Natural killer cell (primary cell): ENCODE measurements at regions of chr7 and their contacts with region 1.

Region 1: DNA sequence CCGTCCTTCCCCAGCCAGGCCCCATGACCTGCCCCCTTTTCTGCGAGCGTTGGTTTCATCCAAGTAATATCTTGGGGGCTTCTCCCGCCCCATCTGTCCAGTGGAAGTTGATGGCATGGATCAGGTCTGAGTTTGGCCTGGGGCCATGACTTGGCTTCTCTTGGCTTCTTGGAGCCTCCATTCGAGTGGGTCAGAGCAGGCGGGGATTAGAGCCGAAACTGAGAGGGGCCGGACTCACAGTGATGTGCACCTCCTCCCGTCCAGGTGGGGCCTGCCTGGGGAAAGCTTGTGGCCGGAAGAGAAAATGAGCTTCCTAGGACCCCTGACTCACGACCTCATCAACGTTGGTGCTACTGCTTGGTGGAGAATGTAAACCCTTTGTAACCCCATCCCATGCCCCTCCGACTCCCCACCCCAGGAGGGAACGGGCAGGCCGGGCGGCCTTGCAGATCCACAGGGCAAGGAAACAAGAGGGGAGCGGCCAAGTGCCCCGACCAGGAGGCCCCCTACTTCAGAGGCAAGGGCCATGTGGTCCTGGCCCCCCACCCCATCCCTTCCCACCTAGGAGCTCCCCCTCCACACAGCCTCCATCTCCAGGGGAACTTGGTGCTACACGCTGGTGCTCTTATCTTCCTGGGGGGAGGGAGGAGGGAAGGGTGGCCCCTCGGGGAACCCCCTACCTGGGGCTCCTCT is 15.1 kb upstream of the LIMK1 start:
- DNase-seq: no peak
- ATAC-seq: no peak
- H3K4me3 ChIP-seq: no peak overlapping the region
- H3K4me3 Mint-ChIP-seq: no peak overlapping the region
- H3K27ac ChIP-seq: no peak overlapping the region
- H3K27ac Mint-ChIP-seq: peak overlapping the region in 1 of 2 donors; percentile 40
- H3K4me1 ChIP-seq: peaks cover 7% of the 10 kb centered on the region
- H3K4me1 Mint-ChIP-seq: no peaks in the 10 kb centered on the region
- H3K27me3 ChIP-seq: no peaks in the 10 kb centered on the region
- H3K27me3 Mint-ChIP-seq: no peaks in the 10 kb centered on the region
- CTCF ChIP-seq: no peak

Region 2: DNA sequence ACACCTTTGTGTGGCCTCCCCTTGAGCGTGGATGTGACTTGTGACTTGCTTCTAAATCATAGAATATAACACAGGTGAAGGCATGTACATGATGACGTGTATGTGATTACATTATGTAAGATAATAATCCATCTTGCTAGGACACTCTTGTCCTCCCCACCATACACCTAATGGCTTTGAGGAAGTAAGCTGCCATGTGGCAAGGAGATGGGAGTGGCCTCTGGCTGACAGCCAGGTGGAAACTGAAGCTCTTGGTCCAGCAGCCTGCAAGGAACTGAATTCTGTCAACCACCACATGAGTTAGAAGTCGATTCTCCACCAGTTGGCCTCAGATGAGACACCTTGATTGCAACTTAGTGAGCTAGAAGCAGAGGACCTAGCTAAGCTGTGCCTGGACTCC is 108.0 kb before region 1 on chr7:
- intact Hi-C with region 1: no loop called
- DNase-seq: no peak
- ATAC-seq: no peak
- H3K4me3 ChIP-seq: no peak overlapping the region
- H3K4me3 Mint-ChIP-seq: no peak overlapping the region
- H3K27ac ChIP-seq: no peak overlapping the region
- H3K27ac Mint-ChIP-seq: no peak overlapping the region
- H3K4me1 ChIP-seq: no peaks in the 10 kb centered on the region
- H3K4me1 Mint-ChIP-seq: no peaks in the 10 kb centered on the region
- H3K27me3 ChIP-seq: no peaks in the 10 kb centered on the region
- H3K27me3 Mint-ChIP-seq: peaks cover 6 to 8% of the 10 kb centered on the region in 2 donors
- CTCF ChIP-seq: no peak

Region 3: DNA sequence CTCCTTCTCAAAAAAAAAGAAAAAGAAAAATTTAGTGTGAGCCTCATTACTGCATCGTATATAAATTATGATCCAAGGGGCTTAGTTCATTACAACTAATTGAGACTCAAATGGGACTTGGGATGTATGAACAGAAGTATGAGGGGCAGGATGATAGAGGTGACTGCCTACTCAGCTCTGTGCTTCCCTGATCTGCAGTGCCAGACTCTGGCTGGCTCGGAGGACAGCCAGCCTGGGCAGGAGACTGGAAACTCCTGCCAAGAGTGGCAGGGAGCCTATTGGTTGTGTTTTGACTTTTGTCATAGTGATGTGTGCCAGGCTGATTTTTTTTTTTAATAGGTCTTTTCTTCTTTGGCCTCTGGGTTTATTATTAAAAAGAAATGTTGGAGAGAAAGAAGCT is 311.4 kb after region 1 on chr7:
- intact Hi-C with region 1: no loop called
- DNase-seq: no peak
- ATAC-seq: no peak
- H3K4me3 ChIP-seq: no peak overlapping the region
- H3K4me3 Mint-ChIP-seq: no peak overlapping the region
- H3K27ac ChIP-seq: no peak overlapping the region
- H3K27ac Mint-ChIP-seq: no peak overlapping the region
- H3K4me1 ChIP-seq: no peaks in the 10 kb centered on the region
- H3K4me1 Mint-ChIP-seq: no peaks in the 10 kb centered on the region
- H3K27me3 ChIP-seq: no peaks in the 10 kb centered on the region
- H3K27me3 Mint-ChIP-seq: no peaks in the 10 kb centered on the region
- CTCF ChIP-seq: no peak

Region 4: GRCh38 chr7:74401137-74401859 is 332.8 kb after region 1 on chr7:
- intact Hi-C with region 1: loop called (anchors 1 kb)
- DNase-seq: peak; percentile 74 to 85
- ATAC-seq: peak; percentile 68 to 95 (median 87)
- H3K4me3 ChIP-seq: no peak overlapping the region
- H3K4me3 Mint-ChIP-seq: no peak overlapping the region
- H3K27ac ChIP-seq: no peak overlapping the region
- H3K27ac Mint-ChIP-seq: no peak overlapping the region
- H3K4me1 ChIP-seq: no peaks in the 10 kb centered on the region
- H3K4me1 Mint-ChIP-seq: no peaks in the 10 kb centered on the region
- H3K27me3 ChIP-seq: no peaks in the 10 kb centered on the region
- H3K27me3 Mint-ChIP-seq: no peaks in the 10 kb centered on the region
- CTCF ChIP-seq: peak; percentile 87